H1 (cell line): ENCODE measurements at regions of chr1 and their contacts with region 1.

Region 1: GRCh38 chr1:180252638-180253536 is 22.8 kb downstream of the LHX4 start:
- DNase-seq: peak in 1 of 2 experiments; percentile 98
- H3K4me3 ChIP-seq: no peak overlapping the region
- H3K27ac ChIP-seq: no peak overlapping the region
- H3K4me1 ChIP-seq: peaks cover 0 to 22% (median 12%) of the 10 kb centered on the region in 4 experiments; a peak in 6 of 7 replicates
- H3K27me3 ChIP-seq: no peaks in the 10 kb centered on the region; a peak in 1 of 7 replicates
- CTCF ChIP-seq: peak; percentile 95 to 98 (median 98)
- EP300 ChIP-seq: no peak
- POLR2A ChIP-seq: no peak
- RAD21 ChIP-seq: peak; percentile 92 to 94

Region 2: DNA sequence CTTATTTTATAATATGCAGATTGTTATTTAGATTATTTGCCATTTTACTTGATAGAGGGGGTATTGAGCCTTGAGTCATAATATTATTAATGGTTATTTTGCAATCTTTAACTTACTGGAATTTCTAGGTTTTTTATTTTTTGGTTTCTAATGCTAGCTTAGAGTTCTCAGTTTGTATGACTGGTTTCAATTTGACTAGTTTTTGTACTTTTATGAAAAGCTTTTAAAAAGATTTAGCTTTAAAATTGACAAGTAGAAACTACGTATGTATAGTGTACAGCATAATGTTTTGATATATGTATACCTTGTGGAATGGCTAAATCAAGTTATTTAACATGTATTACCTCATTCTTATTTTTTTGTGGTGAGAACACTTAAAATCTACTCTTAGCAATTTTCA is 256.8 kb before region 1 on chr1:
- CTCF ChIA-PET with region 1: no interaction called
- POLR2A ChIA-PET with region 1: no interaction called
- DNase-seq: no peak
- H3K4me3 ChIP-seq: no peak overlapping the region
- H3K27ac ChIP-seq: no peak overlapping the region
- H3K4me1 ChIP-seq: no peaks in the 10 kb centered on the region
- H3K27me3 ChIP-seq: no peaks in the 10 kb centered on the region
- CTCF ChIP-seq: no peak
- EP300 ChIP-seq: no peak
- POLR2A ChIP-seq: no peak
- RAD21 ChIP-seq: no peak

Region 3: GRCh38 chr1:180188091-180188506 is 64.8 kb before region 1 on chr1:
- CTCF ChIA-PET with region 1: interaction called, 37 read pairs
- POLR2A ChIA-PET with region 1: no interaction called
- DNase-seq: peak in 1 of 2 experiments; percentile 81
- H3K4me3 ChIP-seq: no peak overlapping the region
- H3K27ac ChIP-seq: no peak overlapping the region
- H3K4me1 ChIP-seq: no peaks in the 10 kb centered on the region
- H3K27me3 ChIP-seq: no peaks in the 10 kb centered on the region
- CTCF ChIP-seq: peak; percentile 87 to 94 (median 92)
- EP300 ChIP-seq: no peak
- POLR2A ChIP-seq: no peak
- RAD21 ChIP-seq: peak; percentile 94 to 96

Region 4: DNA sequence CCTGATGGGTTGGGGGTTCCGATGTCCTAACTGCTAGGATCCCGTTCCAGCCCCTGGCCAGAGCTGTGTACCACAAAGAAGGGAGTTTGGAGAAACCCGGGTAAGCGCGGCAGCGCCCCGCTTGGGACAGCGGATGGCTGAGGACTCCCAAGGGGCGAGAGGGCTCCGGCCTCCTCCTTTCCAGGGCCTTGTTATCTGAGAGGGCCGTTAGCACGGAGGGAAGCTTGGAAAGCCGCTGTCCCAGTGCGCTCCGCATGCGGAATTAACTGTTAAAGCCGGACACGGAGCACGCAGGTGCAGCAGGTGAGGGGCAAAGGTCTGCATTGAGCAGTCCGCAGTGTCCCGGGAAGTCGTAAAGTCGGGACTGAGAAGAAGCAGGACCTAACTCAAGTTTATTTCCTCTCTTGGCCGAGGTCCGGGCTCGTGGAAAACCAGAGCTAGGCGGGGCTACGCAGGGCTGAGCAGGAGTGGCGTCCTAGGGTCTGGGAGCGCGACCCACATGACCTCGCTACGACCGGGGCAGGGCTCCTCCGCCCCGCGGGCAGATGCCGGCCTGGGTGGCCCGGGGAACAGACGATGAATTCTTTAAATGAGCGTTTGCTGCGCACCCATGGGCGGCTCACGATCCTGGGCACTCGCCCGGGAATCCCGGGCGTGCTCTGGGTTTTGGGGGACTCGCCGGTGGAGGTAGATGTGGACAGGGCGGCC is 18.4 kb before region 1 on chr1:
- CTCF ChIA-PET with region 1: interaction called, 31 read pairs
- POLR2A ChIA-PET with region 1: interaction called, 12 read pairs
- DNase-seq: peak in 1 of 2 experiments; percentile 84
- H3K4me3 ChIP-seq: peak overlapping the region; percentile 31 to 66 (median 50); a peak in 7 of 8 replicates
- H3K27ac ChIP-seq: no peak overlapping the region
- H3K4me1 ChIP-seq: peaks cover 26 to 53% (median 36%) of the 10 kb centered on the region in 4 experiments
- H3K27me3 ChIP-seq: peaks cover 40 to 75% (median 68%) of the 10 kb centered on the region in 4 experiments
- CTCF ChIP-seq: no peak; a peak in 1 of 4 replicates
- EP300 ChIP-seq: no peak
- POLR2A ChIP-seq: no peak
- RAD21 ChIP-seq: no peak

Region 5: DNA sequence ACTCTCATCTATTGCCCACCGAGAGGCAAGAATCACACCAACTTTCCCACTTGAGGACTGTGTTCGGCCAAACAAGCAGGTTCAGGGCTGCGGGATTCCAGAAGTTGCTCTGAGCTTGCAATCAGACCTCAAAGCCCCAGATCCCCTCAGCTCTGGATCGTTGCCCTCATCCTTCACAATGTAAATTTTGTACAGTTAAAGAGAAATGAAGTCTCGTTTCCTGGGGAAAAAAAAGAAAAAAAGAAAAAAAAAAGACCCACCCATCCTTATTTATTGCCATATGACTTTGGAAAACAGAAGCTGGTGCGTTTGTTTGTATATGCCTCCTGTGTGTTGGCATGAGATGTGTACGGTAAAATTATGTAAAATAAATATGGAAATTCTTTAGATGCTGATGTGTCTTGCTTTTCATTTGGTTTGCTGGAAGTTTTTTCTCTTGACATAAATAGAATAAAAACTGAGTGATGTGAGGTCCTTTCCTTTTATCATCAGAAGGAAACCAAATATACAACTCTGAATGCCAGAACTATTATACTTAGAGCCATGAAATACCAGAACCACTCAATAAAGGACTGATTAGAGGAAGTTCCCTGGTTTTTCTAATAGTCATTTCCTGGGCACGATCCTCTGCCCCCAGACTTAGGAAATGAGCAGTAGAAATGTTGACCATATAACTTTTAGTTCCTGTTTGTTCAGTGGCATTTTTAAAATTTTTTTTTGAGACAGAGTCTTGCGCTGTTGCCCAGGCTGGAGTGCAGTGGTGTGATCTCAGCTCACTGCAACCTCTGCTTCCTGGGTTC is 25.9 kb after region 1 on chr1:
- CTCF ChIA-PET with region 1: interaction called, 244 read pairs
- POLR2A ChIA-PET with region 1: interaction called, 4 read pairs
- DNase-seq: no peak
- H3K4me3 ChIP-seq: no peak overlapping the region
- H3K27ac ChIP-seq: 0 out of 2 replicates have a peak overlapping the region, but pooled peaks have one; percentile 2
- H3K4me1 ChIP-seq: peaks cover 0 to 9% (median 6%) of the 10 kb centered on the region in 4 experiments; a peak in 6 of 7 replicates
- H3K27me3 ChIP-seq: no peaks in the 10 kb centered on the region
- CTCF ChIP-seq: no peak
- EP300 ChIP-seq: no peak
- POLR2A ChIP-seq: no peak
- RAD21 ChIP-seq: no peak

Region 6: GRCh38 chr1:180365039-180365438 is 112.2 kb after region 1 on chr1:
- CTCF ChIA-PET with region 1: interaction called, 19 read pairs
- POLR2A ChIA-PET with region 1: no interaction called
- DNase-seq: no peak
- H3K4me3 ChIP-seq: no peak overlapping the region
- H3K27ac ChIP-seq: no peak overlapping the region
- H3K4me1 ChIP-seq: peaks cover 2 to 11% (median 3%) of the 10 kb centered on the region in 4 experiments; a peak in 6 of 7 replicates
- H3K27me3 ChIP-seq: no peaks in the 10 kb centered on the region
- CTCF ChIP-seq: peak in 2 of 3 experiments; percentile 63 to 71; a peak in 3 of 4 replicates
- EP300 ChIP-seq: no peak
- POLR2A ChIP-seq: no peak
- RAD21 ChIP-seq: peak; percentile 64 to 76

Region 7: GRCh38 chr1:180502360-180503273 is 249.7 kb after region 1 on chr1 and contains the start of gene ACBD6:
- CTCF ChIA-PET with region 1: interaction called, 10 read pairs
- POLR2A ChIA-PET with region 1: no interaction called
- DNase-seq: peak; percentile 54 to 95
- H3K4me3 ChIP-seq: peak within 1 kb of the TSS; percentile 74 to 95 (median 78)
- H3K27ac ChIP-seq: peak within 1 kb of the TSS; percentile 92
- H3K4me1 ChIP-seq: peaks cover 0 to 4% (median 1%) of the 10 kb centered on the region in 4 experiments; a peak in 2 of 7 replicates
- H3K27me3 ChIP-seq: peaks cover 0 to 4% (median 0%) of the 10 kb centered on the region in 4 experiments; a peak in 2 of 7 replicates
- CTCF ChIP-seq: peak in 2 of 3 experiments; percentile 7 to 24; a peak in 1 of 4 replicates
- EP300 ChIP-seq: 0 out of 3 replicates have a peak, but pooled peaks of 1 of the 2 experiments have one; percentile 27
- POLR2A ChIP-seq: peak in 1 of 2 experiments; percentile 87; a peak in 2 of 3 replicates
- RAD21 ChIP-seq: no peak
- total RNA-seq, gene ACBD6: 52.0 and 58.0 TPM in 2 replicates